PC-9 (cell line): ENCODE measurements at regions of chr5 and their contacts with region 1.

Region 1: GRCh38 chr5:180201051-180201987 is 7.7 kb downstream of the RASGEF1C start:
- DNase-seq: peak in 1 of 2 experiments; percentile 21
- H3K4me3 ChIP-seq: no peak overlapping the region
- H3K27ac ChIP-seq: no peak overlapping the region
- H3K4me1 ChIP-seq: no peaks in the 10 kb centered on the region
- H3K27me3 ChIP-seq: no peaks in the 10 kb centered on the region
- CTCF ChIP-seq: peak; percentile 60

Region 2: GRCh38 chr5:180328296-180329137 is 127.2 kb after region 1 on chr5:
- CTCF ChIA-PET with region 1: no interaction called
- POLR2A ChIA-PET with region 1: no interaction called
- intact Hi-C with region 1: no loop called
- DNase-seq: peak; percentile 55 to 78
- H3K4me3 ChIP-seq: no peak overlapping the region
- H3K27ac ChIP-seq: no peak overlapping the region
- H3K4me1 ChIP-seq: peaks cover 45% of the 10 kb centered on the region
- H3K27me3 ChIP-seq: no peaks in the 10 kb centered on the region
- CTCF ChIP-seq: peak; percentile 90

Region 3: DNA sequence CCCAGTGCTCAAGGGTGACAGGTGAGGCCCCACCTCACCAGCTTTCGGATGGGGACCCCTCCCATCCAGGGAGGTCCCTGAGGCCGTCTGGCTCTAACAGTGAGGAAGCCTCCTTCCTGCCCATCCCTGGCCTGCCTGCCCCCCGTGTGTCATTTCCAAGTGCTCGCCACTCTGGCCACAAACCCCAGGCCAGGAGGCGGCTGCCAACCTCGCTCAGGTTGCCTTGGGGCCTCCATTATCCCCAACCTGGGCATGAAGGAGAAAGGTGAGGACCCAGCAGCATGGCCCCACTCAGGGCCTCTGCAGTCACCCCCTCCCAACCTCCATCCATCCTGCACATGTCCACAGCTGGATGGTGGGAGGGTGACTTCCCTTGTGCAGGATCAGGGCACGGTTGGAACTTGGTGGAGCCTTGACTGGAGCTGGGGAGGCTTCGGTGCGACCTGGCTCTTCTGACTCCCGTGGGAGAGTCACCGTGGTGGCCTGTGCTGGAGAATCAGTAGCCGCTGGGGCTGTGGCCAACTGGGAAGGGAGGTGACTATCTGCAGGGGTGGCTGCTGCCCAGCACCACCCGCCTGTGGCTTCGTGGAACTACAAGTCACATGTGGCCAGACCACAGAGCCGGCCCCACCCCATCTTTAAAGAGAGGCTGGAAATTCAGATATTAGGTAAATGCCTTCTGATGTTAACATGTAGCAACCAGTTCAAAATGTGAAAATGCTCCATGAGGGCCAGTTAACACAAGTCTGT is 189.3 kb after region 1 on chr5:
- CTCF ChIA-PET with region 1: no interaction called
- POLR2A ChIA-PET with region 1: no interaction called
- intact Hi-C with region 1: no loop called
- DNase-seq: peak in 1 of 2 experiments; percentile 17
- H3K4me3 ChIP-seq: no peak overlapping the region
- H3K27ac ChIP-seq: no peak overlapping the region
- H3K4me1 ChIP-seq: no peaks in the 10 kb centered on the region
- H3K27me3 ChIP-seq: no peaks in the 10 kb centered on the region
- CTCF ChIP-seq: 0 out of 2 replicates have a peak, but pooled peaks have one; percentile 28

Region 4: DNA sequence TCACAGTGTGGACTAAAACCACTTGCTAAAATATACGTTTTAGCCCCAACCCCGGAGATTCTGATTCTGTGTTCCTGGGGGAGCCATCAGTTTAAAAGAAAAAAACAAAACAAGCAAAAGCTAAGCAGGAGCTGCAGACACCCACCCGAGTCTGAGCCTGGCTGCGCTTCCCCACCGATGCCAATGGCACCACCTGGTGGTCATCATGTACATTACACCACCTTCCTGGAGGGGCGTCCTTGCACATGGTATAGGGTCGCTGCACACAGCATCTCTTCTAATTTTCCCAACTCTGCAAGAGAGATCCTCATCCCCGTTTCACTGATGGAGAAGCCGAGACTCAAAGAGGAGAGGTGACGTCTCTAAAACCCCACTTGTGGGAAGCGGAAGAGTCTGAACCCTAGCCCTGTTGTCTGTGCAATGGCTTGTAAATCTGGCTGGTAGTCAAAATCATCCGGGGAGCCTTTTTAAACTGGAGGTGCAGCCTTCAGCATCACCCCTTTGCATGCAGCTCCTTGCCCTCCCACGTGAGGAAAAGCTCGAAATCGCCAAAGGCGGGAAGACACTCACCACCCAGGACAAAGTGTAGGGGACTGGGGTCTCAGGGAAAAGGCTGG is 269.8 kb after region 1 on chr5:
- CTCF ChIA-PET with region 1: no interaction called
- POLR2A ChIA-PET with region 1: no interaction called
- intact Hi-C with region 1: loop called (anchors 5 kb)
- DNase-seq: peak in 1 of 2 experiments; percentile 63
- H3K4me3 ChIP-seq: no peak overlapping the region
- H3K27ac ChIP-seq: no peak overlapping the region
- H3K4me1 ChIP-seq: no peaks in the 10 kb centered on the region; the same call in 1 of the 2 replicates
- H3K27me3 ChIP-seq: no peaks in the 10 kb centered on the region
- CTCF ChIP-seq: peak; percentile 98